SK-N-SH (cell line): ENCODE measurements at regions of chr10 and their contacts with region 1.

Region 1: GRCh38 chr10:116627386-116627933 is 6.7 kb downstream of the PNLIPRP2 start:
- DNase-seq: peak; percentile 92
- H3K4me3 ChIP-seq: peak overlapping the region; percentile 32 to 39
- H3K27ac ChIP-seq: no peak overlapping the region
- H3K4me1 ChIP-seq: no peaks in the 10 kb centered on the region; a peak in 1 of 4 replicates
- H3K27me3 ChIP-seq: peaks cover 5% of the 10 kb centered on the region; the same call in 1 of the 2 replicates
- CTCF ChIP-seq: peak; percentile 45
- EP300 ChIP-seq: no peak
- RAD21 ChIP-seq: peak; percentile 65

Region 2: DNA sequence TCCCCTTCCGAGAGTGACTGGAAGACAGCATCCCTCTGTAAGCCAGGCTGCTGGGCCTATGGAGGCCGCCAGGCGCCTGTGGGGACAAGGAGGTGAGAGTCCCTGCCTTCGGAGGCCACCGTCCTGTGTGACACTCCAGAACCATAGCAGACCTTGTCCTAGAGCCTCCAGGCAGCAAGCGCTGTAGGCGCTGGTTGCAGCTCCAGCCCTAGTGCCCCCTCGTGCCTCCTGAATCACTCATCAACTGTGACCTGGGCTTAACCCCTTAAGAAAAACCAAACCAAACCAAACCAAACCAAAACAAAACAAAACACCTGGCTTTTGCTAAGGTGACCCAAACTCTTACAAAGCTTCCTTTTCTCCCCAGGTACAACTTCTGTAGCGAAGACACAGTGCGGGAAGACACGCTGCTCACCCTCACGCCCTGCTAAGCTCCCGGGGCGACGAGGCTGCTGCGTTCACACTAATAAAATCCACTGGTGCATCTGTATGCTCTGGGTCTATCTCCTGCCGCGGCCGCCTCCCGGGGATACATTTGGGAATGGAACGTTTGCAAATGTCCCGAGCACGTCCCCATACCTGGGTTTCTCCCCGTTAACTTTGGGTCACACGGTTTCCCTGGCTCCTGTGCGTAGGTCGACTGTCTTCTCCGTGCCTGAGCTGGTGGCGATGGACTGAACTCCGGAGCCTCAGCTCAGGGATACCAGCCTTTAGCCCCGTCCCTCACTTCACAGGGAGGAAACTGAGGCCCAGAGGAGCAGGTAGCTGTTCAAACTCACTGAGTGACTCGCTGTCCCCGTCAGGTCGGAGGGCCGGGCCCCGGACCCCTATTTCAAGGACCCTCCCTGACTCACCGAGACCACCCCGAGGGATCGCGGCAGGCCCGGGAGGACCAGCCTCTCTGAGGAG is 18.5 kb before region 1 on chr10:
- CTCF ChIA-PET with region 1: interaction called, 39 read pairs
- POLR2A ChIA-PET with region 1: no interaction called
- DNase-seq: no peak
- H3K4me3 ChIP-seq: peak overlapping the region in 1 of 2 experiments; percentile 36; a peak in 3 of 4 replicates
- H3K27ac ChIP-seq: no peak overlapping the region
- H3K4me1 ChIP-seq: peaks cover 0 to 7% of the 10 kb centered on the region in 2 experiments; a peak in 1 of 4 replicates
- H3K27me3 ChIP-seq: no peaks in the 10 kb centered on the region
- CTCF ChIP-seq: no peak
- EP300 ChIP-seq: no peak
- RAD21 ChIP-seq: no peak

Region 3: GRCh38 chr10:116615199-116615776 is 12.2 kb before region 1 on chr10:
- CTCF ChIA-PET with region 1: interaction called, 39 read pairs
- POLR2A ChIA-PET with region 1: no interaction called
- DNase-seq: no peak
- H3K4me3 ChIP-seq: no peak overlapping the region
- H3K27ac ChIP-seq: no peak overlapping the region
- H3K4me1 ChIP-seq: no peaks in the 10 kb centered on the region
- H3K27me3 ChIP-seq: no peaks in the 10 kb centered on the region; the same call in 1 of the 2 replicates
- CTCF ChIP-seq: no peak
- EP300 ChIP-seq: no peak
- RAD21 ChIP-seq: no peak

Region 4: DNA sequence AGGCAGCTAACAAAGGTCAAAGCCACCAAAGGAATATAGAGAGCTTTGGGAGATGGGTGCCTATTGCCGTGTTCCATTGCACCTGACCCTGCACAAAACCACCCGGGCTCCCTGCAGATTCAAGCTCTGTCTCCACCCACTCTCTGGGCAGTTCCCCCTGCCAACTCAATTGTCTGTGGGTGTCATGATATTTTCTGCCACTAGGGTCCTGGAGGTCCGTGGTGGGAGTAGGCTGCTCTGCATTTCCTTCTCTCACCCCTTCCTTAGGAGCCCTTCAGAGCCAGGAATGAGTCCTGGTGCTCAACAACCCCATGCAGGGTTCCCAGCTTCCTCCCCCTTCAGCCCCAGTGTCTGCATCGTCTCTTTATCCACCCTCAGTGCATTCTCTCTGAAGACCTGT is 27.4 kb after region 1 on chr10:
- CTCF ChIA-PET with region 1: interaction called, 13 read pairs
- POLR2A ChIA-PET with region 1: no interaction called
- DNase-seq: peak; percentile 46
- H3K4me3 ChIP-seq: no peak overlapping the region
- H3K27ac ChIP-seq: no peak overlapping the region
- H3K4me1 ChIP-seq: no peaks in the 10 kb centered on the region; a peak in 1 of 4 replicates
- H3K27me3 ChIP-seq: no peaks in the 10 kb centered on the region
- CTCF ChIP-seq: peak; percentile 40
- EP300 ChIP-seq: no peak
- RAD21 ChIP-seq: no peak

Region 5: GRCh38 chr10:116683821-116684220 is 56.4 kb after region 1 on chr10:
- CTCF ChIA-PET with region 1: interaction called, 32 read pairs
- POLR2A ChIA-PET with region 1: no interaction called
- DNase-seq: no peak
- H3K4me3 ChIP-seq: no peak overlapping the region
- H3K27ac ChIP-seq: no peak overlapping the region
- H3K4me1 ChIP-seq: peaks cover 5 to 6% of the 10 kb centered on the region in 2 experiments; a peak in 1 of 4 replicates
- H3K27me3 ChIP-seq: no peaks in the 10 kb centered on the region
- CTCF ChIP-seq: no peak
- EP300 ChIP-seq: no peak
- RAD21 ChIP-seq: no peak

Region 6: GRCh38 chr10:116765547-116766162 is 138.2 kb after region 1 on chr10:
- CTCF ChIA-PET with region 1: interaction called, 13 read pairs
- POLR2A ChIA-PET with region 1: no interaction called
- DNase-seq: no peak
- H3K4me3 ChIP-seq: no peak overlapping the region
- H3K27ac ChIP-seq: no peak overlapping the region
- H3K4me1 ChIP-seq: peaks cover 0 to 4% of the 10 kb centered on the region in 2 experiments; a peak in 1 of 4 replicates
- H3K27me3 ChIP-seq: no peaks in the 10 kb centered on the region; the same call in 1 of the 2 replicates
- CTCF ChIP-seq: peak; percentile 44
- EP300 ChIP-seq: no peak
- RAD21 ChIP-seq: peak; percentile 25; the same call in 1 of the 2 replicates

Region 7: DNA sequence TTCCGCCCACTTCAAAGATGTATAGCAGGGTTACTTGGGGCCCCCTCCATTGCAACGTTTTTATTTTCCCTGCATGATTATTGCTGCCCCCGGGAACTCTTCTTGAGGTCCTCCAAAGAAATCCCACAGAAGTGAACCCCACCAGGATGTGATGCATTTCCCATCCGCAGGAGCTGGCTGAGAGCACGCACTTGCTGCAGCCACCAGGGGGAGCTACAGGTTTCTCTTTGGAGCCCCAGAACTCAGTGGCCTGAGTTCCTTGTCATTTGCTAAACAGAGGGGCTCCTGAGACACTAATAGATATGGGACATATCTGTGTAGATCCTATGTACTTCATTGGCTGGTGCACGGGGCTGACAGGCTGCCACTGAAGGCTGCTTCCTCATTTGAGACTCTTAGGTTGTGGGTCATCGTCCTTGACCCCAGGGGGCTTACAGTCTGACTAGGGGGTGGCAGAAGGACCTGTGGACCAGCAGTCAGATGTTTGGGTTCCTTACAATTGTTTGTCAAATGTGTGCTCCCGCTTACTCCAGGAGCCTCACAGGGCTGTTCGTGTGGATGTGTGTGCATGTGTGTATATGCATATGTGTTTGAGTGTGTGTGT is 169.6 kb after region 1 on chr10:
- CTCF ChIA-PET with region 1: interaction called, 142 read pairs
- POLR2A ChIA-PET with region 1: no interaction called
- DNase-seq: peak; percentile 87
- H3K4me3 ChIP-seq: no peak overlapping the region
- H3K27ac ChIP-seq: no peak overlapping the region
- H3K4me1 ChIP-seq: no peaks in the 10 kb centered on the region
- H3K27me3 ChIP-seq: no peaks in the 10 kb centered on the region
- CTCF ChIP-seq: peak; percentile 97
- EP300 ChIP-seq: no peak
- RAD21 ChIP-seq: peak; percentile 97